AG04450 (cell line): ENCODE measurements at regions of chr5 and their contacts with region 1.

Region 1: GRCh38 chr5:157335534-157336422 is 69.9 kb downstream of the CYFIP2 start:
- DNase-seq: peak; percentile 44
- H3K4me3 ChIP-seq: no peak overlapping the region
- H3K27ac ChIP-seq: no peak overlapping the region
- H3K27me3 ChIP-seq: no peaks in the 10 kb centered on the region
- CTCF ChIP-seq: no peak

Region 2: DNA sequence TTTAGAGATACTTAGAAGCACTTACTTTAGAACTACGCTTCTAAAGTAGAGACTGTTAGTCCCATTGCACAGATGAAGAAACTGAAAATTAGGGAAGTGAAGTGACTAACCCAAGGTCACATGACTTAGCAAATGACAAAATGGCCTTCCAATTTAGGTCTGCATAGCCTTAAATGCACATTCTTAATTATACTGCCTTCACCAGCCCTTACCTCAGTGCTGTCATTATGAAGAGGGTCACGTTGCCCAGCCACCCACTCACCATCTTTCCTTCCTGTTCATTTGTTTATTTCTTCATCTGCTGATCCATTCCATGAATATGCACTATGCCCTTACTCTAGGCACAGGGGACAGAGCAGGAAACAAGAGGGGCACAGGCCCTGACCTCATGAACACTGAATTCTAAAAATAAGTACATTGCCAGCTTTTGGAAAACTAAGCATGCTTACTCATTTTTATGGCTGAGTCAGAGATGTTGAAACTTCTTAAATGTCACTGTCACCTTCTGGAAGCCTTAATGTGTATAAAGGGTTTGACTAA is 235.6 kb before region 1 on chr5:
- CTCF ChIA-PET with region 1: no interaction called
- POLR2A ChIA-PET with region 1: no interaction called
- DNase-seq: no peak
- H3K4me3 ChIP-seq: no peak overlapping the region
- H3K27ac ChIP-seq: no peak overlapping the region
- H3K27me3 ChIP-seq: no peaks in the 10 kb centered on the region
- CTCF ChIP-seq: no peak

Region 3: GRCh38 chr5:157312492-157312891 is 23.3 kb before region 1 on chr5:
- CTCF ChIA-PET with region 1: no interaction called
- POLR2A ChIA-PET with region 1: no interaction called
- DNase-seq: no peak
- H3K4me3 ChIP-seq: no peak overlapping the region
- H3K27ac ChIP-seq: no peak overlapping the region
- H3K27me3 ChIP-seq: peaks cover 12% of the 10 kb centered on the region
- CTCF ChIP-seq: peak; percentile 88

Region 4: DNA sequence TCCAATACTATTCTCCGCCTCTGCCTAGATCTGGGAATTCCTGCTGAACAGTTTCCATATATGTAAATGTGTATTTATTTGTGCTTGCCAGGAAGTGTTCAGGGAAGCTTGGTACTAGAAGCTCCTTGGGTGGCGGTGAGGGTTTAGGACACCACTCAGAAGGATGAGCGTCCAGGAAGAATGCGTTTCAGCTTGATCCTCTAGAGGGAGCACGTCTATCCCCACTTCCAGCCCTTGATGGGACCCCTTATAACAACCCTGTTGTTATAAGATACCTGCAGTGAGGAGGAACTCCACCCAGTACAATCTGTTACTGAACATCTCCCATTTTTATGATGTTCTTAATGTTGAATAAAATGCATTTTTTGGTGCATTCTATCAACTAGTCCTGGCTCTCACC is 19.0 kb after region 1 on chr5:
- CTCF ChIA-PET with region 1: interaction called, 16 read pairs
- POLR2A ChIA-PET with region 1: no interaction called
- DNase-seq: no peak
- H3K4me3 ChIP-seq: no peak overlapping the region
- H3K27ac ChIP-seq: no peak overlapping the region
- H3K27me3 ChIP-seq: no peaks in the 10 kb centered on the region
- CTCF ChIP-seq: peak; percentile 41

Region 5: GRCh38 chr5:157603333-157604190 is 267.8 kb after region 1 on chr5:
- CTCF ChIA-PET with region 1: no interaction called
- POLR2A ChIA-PET with region 1: no interaction called
- DNase-seq: peak; percentile 48
- H3K4me3 ChIP-seq: no peak overlapping the region
- H3K27ac ChIP-seq: no peak overlapping the region
- H3K27me3 ChIP-seq: no peaks in the 10 kb centered on the region
- CTCF ChIP-seq: no peak